ENCODE measurements at regions of chr11 and their contacts with region 1.

Region 1: DNA sequence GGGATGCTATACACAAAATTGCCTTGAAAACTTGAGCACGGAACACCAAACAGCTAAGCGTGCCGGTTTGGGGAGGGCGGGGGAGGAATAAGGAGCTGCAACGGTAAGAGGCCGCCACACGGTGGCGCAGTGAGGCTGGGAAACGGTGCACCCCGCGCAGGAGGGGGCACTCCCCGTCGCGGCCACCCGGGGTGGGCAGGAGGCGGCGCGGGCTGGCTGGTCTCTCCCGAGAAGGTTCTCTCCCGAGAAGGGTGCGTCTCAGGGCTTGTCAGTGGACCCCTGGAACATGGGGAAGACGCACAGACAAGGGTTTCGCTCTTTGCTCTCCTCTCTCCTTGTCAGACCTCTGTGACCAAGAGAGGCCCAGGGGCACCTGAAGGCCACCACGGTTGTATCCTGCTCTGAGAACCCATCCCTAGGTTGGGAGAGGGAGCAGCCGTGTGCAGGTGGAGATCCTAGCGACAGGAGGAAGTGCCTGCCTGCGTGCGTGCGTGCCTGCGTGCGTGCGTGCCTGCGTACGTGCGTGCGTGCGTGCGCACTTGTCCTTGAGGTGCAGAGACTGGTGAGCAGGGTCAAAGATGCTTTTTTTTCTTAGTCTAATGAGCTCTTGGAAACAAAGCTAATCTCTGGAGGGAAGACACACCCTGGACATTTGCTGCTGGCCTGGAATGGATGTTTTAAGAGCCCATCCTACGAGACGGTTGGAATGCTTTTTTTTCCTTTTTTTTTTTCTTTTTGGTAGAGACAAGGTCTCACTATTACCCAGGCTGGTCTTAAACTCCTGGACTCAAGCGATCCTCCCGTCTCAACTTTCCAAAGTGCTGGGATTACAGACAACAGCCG is 18.1 kb upstream of the JAM3 start:
- DNase-seq: no peak
- H3K4me3 ChIP-seq: peak overlapping the region; percentile 17 to 45 (median 28)
- H3K27ac ChIP-seq: no peak overlapping the region
- H3K4me1 ChIP-seq: peaks cover 25 to 36% (median 34%) of the 10 kb centered on the region in 4 donors
- H3K27me3 ChIP-seq: no peaks in the 10 kb centered on the region
- CTCF ChIP-seq: peak; percentile 91 to 97 (median 95)
- EP300 ChIP-seq: no peak
- POLR2A ChIP-seq: no peak

Region 2: DNA sequence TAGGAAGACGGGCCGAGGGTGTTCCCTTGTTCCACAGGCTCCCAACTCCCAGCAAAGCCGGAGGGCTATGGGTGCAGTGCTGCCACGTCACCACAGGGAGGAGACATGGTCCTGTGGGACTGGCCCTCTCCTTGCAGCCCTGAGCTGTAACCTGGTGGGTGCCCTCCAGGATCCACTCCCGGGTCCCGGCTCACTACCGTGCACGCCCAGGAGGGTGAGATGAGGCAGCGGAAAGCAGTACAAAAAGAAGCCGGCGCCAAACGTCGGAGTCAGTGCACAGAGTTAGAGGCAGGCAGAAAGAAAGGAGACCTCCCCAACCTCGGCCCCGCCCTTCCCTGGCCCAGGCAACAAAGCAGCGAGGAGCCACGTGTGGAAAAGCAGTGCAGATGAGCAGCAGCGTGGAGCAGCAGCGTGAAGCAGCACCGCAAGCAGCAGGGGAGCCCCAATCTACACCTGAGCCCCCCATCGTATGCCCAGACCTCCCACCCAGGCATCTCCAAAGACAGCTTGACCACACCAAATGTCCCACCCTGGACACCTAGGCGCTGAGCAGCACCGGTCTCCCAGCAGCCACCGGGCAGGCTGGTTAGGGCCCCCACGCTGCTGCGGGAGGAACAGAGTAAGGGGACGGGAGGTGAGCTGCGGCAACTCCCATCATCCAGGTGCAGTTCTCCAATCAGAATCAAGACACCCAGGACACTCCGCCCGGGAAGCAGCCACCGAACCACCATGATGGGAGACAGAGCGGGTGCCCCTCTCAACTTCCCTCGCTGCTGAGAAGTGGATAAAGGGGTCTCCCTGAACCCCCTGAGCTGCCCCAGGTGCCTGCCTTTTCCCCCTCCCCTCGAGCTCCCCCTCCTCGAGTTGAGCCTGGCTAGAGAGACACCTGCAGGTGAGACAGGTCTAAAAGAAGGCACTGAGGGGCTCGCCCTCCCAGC is 122.8 kb before region 1 on chr11:
- intact Hi-C with region 1: loop called (anchors 2 kb)
- DNase-seq: no peak
- H3K4me3 ChIP-seq: peak overlapping the region in 2 of 4 donors; percentile 29 to 32
- H3K27ac ChIP-seq: peak overlapping the region; percentile 66 to 77 (median 70)
- H3K4me1 ChIP-seq: peaks cover 13 to 47% (median 43%) of the 10 kb centered on the region in 4 donors
- H3K27me3 ChIP-seq: peaks cover 0 to 4% (median 0%) of the 10 kb centered on the region in 4 donors
- CTCF ChIP-seq: peak; percentile 74 to 95 (median 85)
- EP300 ChIP-seq: no peak
- POLR2A ChIP-seq: no peak

Region 3: GRCh38 chr11:133947321-133947756 is 103.4 kb before region 1 on chr11:
- intact Hi-C with region 1: loop called (anchors 5 kb)
- DNase-seq: no peak
- H3K4me3 ChIP-seq: peak overlapping the region; percentile 0 to 33 (median 14)
- H3K27ac ChIP-seq: peak overlapping the region; percentile 90 to 97 (median 96)
- H3K4me1 ChIP-seq: peaks cover 83 to 100% (median 94%) of the 10 kb centered on the region in 4 donors
- H3K27me3 ChIP-seq: no peaks in the 10 kb centered on the region
- CTCF ChIP-seq: peak; percentile 51 to 57 (median 54)
- EP300 ChIP-seq: no peak
- POLR2A ChIP-seq: no peak

Region 4: GRCh38 chr11:133966921-133967598 is 83.7 kb before region 1 on chr11:
- intact Hi-C with region 1: loop called (anchors 5 kb)
- DNase-seq: no peak
- H3K4me3 ChIP-seq: peak overlapping the region; percentile 22 to 34 (median 26)
- H3K27ac ChIP-seq: peak overlapping the region; percentile 71 to 82 (median 80)
- H3K4me1 ChIP-seq: peaks cover 3 to 50% (median 43%) of the 10 kb centered on the region in 4 donors
- H3K27me3 ChIP-seq: no peaks in the 10 kb centered on the region
- CTCF ChIP-seq: peak; percentile 49 to 69 (median 57)
- EP300 ChIP-seq: no peak
- POLR2A ChIP-seq: no peak

Region 5: GRCh38 chr11:134139873-134140331 is 89.1 kb after region 1 on chr11:
- intact Hi-C with region 1: loop called (anchors 1 kb)
- DNase-seq: no peak
- H3K4me3 ChIP-seq: peak overlapping the region in 3 of 4 donors; percentile 10 to 18 (median 17)
- H3K27ac ChIP-seq: peak overlapping the region; percentile 71 to 82 (median 78)
- H3K4me1 ChIP-seq: peaks cover 9 to 17% (median 15%) of the 10 kb centered on the region in 4 donors
- H3K27me3 ChIP-seq: no peaks in the 10 kb centered on the region
- CTCF ChIP-seq: peak; percentile 84 to 94 (median 90)
- EP300 ChIP-seq: no peak
- POLR2A ChIP-seq: no peak

Region 6: GRCh38 chr11:134150195-134150903 is 99.6 kb after region 1 on chr11:
- intact Hi-C with region 1: loop called (anchors 5 kb)
- DNase-seq: no peak
- H3K4me3 ChIP-seq: no peak overlapping the region
- H3K27ac ChIP-seq: peak overlapping the region; percentile 53 to 77 (median 65)
- H3K4me1 ChIP-seq: peaks cover 0 to 58% (median 42%) of the 10 kb centered on the region in 4 donors
- H3K27me3 ChIP-seq: no peaks in the 10 kb centered on the region
- CTCF ChIP-seq: no peak
- EP300 ChIP-seq: peak; percentile 67
- POLR2A ChIP-seq: no peak

Measured in esophagus muscularis mucosa (tissue), 4 donors.